ENCODE measurements at regions of chr17 and their contacts with region 1.

Region 1: DNA sequence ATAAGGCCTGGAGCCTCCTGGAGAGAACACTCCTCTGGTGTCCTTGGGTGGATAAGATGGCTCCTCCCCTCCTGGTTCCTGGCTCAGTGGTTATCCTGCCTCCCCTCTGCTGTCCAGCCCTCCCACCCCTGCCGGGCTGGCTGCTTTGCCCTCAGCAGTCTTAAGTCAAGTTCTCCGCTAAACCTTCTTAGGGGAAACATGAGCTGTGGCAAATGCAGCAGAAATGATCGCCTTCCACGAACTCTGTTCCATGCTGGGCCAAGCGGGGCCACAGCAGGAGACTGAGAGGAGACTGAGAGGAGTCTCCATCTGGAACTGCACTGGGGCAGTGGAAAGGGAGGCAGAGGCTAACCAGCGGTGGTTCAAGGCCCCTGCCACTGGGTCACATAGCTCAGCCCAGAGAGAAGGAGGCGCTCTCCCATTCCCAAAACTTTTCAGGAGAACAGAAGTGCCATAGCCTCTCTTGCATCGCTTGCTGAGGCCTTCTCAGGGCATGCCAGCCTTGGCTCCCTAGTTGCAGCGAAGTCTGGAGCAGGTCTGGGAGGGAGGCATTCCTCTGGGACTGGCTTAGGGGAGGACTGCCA is 26.9 kb downstream of the TNS4 start:
- DNase-seq: no peak
- H3K4me3 ChIP-seq: no peak overlapping the region
- H3K27me3 ChIP-seq: no peaks in the 10 kb centered on the region
- CTCF ChIP-seq: no peak

Region 2: GRCh38 chr17:40362696-40363110 is 111.8 kb before region 1 on chr17:
- CTCF ChIA-PET with region 1: interaction called, 14 read pairs
- POLR2A ChIA-PET with region 1: no interaction called
- DNase-seq: no peak
- H3K4me3 ChIP-seq: peak overlapping the region; percentile 43
- H3K27me3 ChIP-seq: no peaks in the 10 kb centered on the region
- CTCF ChIP-seq: peak; percentile 85

Region 3: GRCh38 chr17:40433551-40434415 is 40.7 kb before region 1 on chr17:
- CTCF ChIA-PET with region 1: interaction called, 24 read pairs
- POLR2A ChIA-PET with region 1: no interaction called
- DNase-seq: no peak
- H3K4me3 ChIP-seq: no peak overlapping the region
- H3K27me3 ChIP-seq: peaks cover 3% of the 10 kb centered on the region; the same call in 1 of the 2 replicates
- CTCF ChIP-seq: peak; percentile 59

Region 4: DNA sequence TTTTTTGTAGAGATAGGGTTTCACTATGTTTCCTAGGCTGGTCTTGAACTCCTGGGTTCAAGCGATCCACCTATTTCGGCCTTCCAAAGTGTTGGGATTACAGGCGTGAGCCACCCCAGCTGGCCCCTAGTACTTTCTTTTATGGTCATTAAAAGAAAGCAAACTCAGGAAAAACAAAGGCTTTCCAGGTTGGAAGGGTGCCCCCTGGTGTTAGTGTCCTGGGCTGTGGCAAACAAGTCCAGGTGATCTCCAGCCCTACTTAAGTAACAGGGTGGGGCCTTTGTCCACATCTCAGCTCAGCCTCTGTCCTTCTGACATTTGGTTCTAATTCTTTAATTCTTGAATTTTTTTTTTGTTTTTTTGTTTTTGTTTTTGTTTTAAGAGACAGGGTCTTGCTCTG is 24.3 kb before region 1 on chr17:
- CTCF ChIA-PET with region 1: interaction called, 20 read pairs
- POLR2A ChIA-PET with region 1: interaction called, 7 read pairs
- DNase-seq: no peak
- H3K4me3 ChIP-seq: no peak overlapping the region
- H3K27me3 ChIP-seq: no peaks in the 10 kb centered on the region
- CTCF ChIP-seq: peak; percentile 70

Region 5: GRCh38 chr17:40464392-40464855 is 10.1 kb before region 1 on chr17:
- CTCF ChIA-PET with region 1: interaction called, 31 read pairs
- POLR2A ChIA-PET with region 1: no interaction called
- DNase-seq: no peak
- H3K4me3 ChIP-seq: no peak overlapping the region
- H3K27me3 ChIP-seq: no peaks in the 10 kb centered on the region
- CTCF ChIP-seq: no peak

Region 6: GRCh38 chr17:40522250-40522952 is 47.9 kb after region 1 on chr17:
- CTCF ChIA-PET with region 1: interaction called, 21 read pairs
- POLR2A ChIA-PET with region 1: no interaction called
- DNase-seq: no peak
- H3K4me3 ChIP-seq: no peak overlapping the region
- H3K27me3 ChIP-seq: no peaks in the 10 kb centered on the region
- CTCF ChIP-seq: no peak

Region 7: DNA sequence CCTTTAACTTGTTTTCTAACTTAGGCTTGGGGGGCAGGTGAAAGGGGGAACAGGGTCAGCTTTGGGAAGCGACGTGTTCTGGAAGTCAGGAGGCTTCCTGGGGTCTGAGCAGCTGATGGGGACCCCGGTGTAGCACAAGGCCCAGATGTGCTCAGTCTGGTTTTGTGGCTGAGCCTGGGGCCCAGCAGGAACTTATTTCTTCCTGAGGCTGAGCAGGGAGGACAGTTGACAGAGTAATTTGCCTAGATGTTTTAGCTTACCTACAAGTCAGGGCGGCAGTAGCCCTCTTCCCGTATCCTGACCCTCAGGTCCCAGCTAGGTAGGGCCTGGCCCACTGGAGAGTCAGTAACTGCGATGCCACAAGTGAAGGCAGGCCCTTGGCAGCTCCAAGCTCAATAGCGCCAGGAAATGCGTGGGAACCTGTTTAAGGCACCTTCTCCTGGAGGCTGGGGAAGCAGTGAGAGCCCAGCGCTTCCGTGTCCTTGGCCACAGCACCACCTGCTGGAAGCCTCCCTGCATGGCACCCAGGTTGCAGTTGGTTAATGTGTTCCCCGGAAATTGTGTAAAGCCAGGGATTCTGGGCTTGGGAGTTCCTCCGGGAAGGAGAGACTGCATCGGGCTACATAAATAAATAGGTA is 85.6 kb after region 1 on chr17:
- CTCF ChIA-PET with region 1: interaction called, 77 read pairs
- POLR2A ChIA-PET with region 1: no interaction called
- DNase-seq: peak; percentile 62
- H3K4me3 ChIP-seq: no peak overlapping the region
- H3K27me3 ChIP-seq: peaks cover 3% of the 10 kb centered on the region
- CTCF ChIP-seq: peak; percentile 99

Region 8: DNA sequence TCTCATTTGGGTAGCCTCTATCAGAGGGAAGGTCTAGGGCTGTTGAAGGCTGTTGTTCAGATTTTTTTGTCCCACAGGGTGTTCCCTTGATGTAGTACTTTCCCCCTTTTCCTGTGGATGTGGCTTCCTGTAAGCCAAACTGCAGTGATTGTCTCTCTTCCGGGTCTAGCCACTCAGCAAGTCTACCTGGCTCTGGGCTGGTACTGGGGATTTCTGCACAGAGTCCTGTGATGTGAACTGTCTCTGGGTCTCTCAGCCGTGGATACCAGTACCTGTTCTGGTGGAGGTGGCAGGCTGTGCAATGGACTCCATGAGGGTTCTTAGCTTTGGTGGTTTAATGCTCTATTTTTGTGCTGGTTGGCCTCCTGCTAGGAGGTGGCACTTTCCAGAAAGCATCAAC is 114.0 kb after region 1 on chr17:
- CTCF ChIA-PET with region 1: no interaction called
- POLR2A ChIA-PET with region 1: no interaction called
- DNase-seq: no peak
- H3K4me3 ChIP-seq: no peak overlapping the region
- H3K27me3 ChIP-seq: peaks cover 6% of the 10 kb centered on the region
- CTCF ChIP-seq: no peak

Measured in BJ (cell line).